Mammary epithelial cell (primary cell): ENCODE measurements at regions of chr9 and their contacts with region 1.

Region 1: GRCh38 chr9:37485389-37486219 is at the start of gene POLR1E:
- DNase-seq: peak; percentile 96
- H3K4me3 ChIP-seq: peak within 1 kb of the TSS; percentile 89 to 90 (median 89)
- H3K27ac ChIP-seq: peak within 1 kb of the TSS; percentile 55
- H3K4me1 ChIP-seq: peaks cover 17% of the 10 kb centered on the region
- H3K27me3 ChIP-seq: no peaks in the 10 kb centered on the region
- CTCF ChIP-seq: no peak
- total RNA-seq, gene POLR1E: 33.8 to 34.5 TPM

Region 2: GRCh38 chr9:37582548-37583157 is 97.0 kb after region 1 on chr9:
- CTCF ChIA-PET with region 1: no interaction called
- dilution Hi-C with region 1: loop called (anchors 5 kb)
- in situ Hi-C with region 1: no loop called
- intact Hi-C with region 1: loop called (anchors 2 kb)
- DNase-seq: peak; percentile 42
- H3K4me3 ChIP-seq: no peak overlapping the region
- H3K27ac ChIP-seq: no peak overlapping the region
- H3K4me1 ChIP-seq: no peaks in the 10 kb centered on the region
- H3K27me3 ChIP-seq: no peaks in the 10 kb centered on the region
- CTCF ChIP-seq: peak; percentile 66 to 73

Region 3: GRCh38 chr9:37753489-37754190 is 268.0 kb after region 1 on chr9 and contains the start of gene TRMT10B:
- CTCF ChIA-PET with region 1: no interaction called
- dilution Hi-C with region 1: loop called (anchors 25 kb)
- in situ Hi-C with region 1: loop called in 1 of 2 experiments (anchors 25 kb)
- intact Hi-C with region 1: no loop called
- DNase-seq: peak; percentile 67
- H3K4me3 ChIP-seq: peak within 1 kb of the TSS; percentile 60 to 74 (median 64)
- H3K27ac ChIP-seq: peak within 1 kb of the TSS; percentile 55
- H3K4me1 ChIP-seq: peaks cover 6% of the 10 kb centered on the region
- H3K27me3 ChIP-seq: no peaks in the 10 kb centered on the region
- CTCF ChIP-seq: no peak
- total RNA-seq, gene TRMT10B: 2.7 to 7.5 TPM

Region 4: GRCh38 chr9:37913480-37914153 is 428.0 kb after region 1 on chr9:
- CTCF ChIA-PET with region 1: interaction called, 15 read pairs
- dilution Hi-C with region 1: no loop called
- in situ Hi-C with region 1: no loop called
- intact Hi-C with region 1: no loop called
- DNase-seq: peak; percentile 65
- H3K4me3 ChIP-seq: no peak overlapping the region
- H3K27ac ChIP-seq: no peak overlapping the region
- H3K4me1 ChIP-seq: peaks cover 18% of the 10 kb centered on the region
- H3K27me3 ChIP-seq: no peaks in the 10 kb centered on the region
- CTCF ChIP-seq: peak; percentile 96 to 98

Region 5: DNA sequence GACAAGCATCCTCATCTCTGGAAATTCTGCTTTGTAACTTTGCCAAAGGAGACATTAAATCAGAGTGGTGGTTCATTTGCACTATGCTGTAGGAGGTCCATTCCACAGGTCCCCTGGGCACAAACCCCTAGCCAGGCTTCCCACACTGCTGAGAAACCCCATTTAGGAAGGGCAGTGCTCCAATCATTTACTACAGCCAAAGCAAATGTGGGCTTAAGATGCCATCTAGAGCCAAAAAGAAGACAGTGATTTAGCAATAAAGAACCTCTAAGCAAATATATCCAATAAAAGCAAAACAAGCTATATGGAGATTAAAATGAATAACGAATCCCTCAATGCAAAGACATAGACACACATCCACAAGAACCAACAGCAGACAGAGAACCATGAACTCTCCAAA is 777.9 kb after region 1 on chr9:
- CTCF ChIA-PET with region 1: no interaction called
- dilution Hi-C with region 1: no loop called
- in situ Hi-C with region 1: no loop called
- intact Hi-C with region 1: loop called (anchors 1 kb)
- DNase-seq: peak; percentile 31
- H3K4me3 ChIP-seq: no peak overlapping the region
- H3K27ac ChIP-seq: no peak overlapping the region
- H3K4me1 ChIP-seq: no peaks in the 10 kb centered on the region
- H3K27me3 ChIP-seq: no peaks in the 10 kb centered on the region
- CTCF ChIP-seq: peak; percentile 41 to 61